Natural killer cell (primary cell): ENCODE measurements at regions of chr5 and their contacts with region 1.

Region 1: GRCh38 chr5:147822686-147823491 is 8.6 kb downstream of the SPINK1 start:
- DNase-seq: peak; percentile 26 to 79
- ATAC-seq: peak; percentile 94 to 99 (median 98)
- H3K4me3 ChIP-seq: no peak overlapping the region
- H3K4me3 Mint-ChIP-seq: no peak overlapping the region
- H3K27ac ChIP-seq: no peak overlapping the region
- H3K27ac Mint-ChIP-seq: no peak overlapping the region
- H3K4me1 ChIP-seq: no peaks in the 10 kb centered on the region
- H3K4me1 Mint-ChIP-seq: peaks cover 0 to 9% of the 10 kb centered on the region in 2 donors
- H3K27me3 ChIP-seq: no peaks in the 10 kb centered on the region
- H3K27me3 Mint-ChIP-seq: peaks cover 13 to 14% of the 10 kb centered on the region in 2 donors
- CTCF ChIP-seq: peak; percentile 99

Region 2: DNA sequence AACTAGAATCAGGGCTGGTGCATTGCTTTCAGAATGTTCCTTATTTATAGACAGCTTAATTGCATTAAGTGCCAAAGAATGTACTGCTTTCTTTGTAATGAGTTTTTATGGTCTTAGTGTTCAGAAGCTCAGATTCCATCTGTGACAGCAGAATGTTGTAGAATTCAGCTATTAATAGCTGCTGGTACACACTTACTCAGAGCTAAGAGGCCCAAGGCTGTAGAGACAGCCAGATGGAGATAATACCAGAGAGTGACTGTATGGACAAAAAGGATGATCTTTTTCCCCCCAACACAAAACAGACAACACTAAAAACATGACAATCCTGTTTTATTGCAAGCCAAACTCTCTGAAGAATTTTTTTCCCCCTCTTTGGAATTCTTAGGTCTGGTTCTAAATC is 994.5 kb before region 1 on chr5:
- intact Hi-C with region 1: no loop called
- DNase-seq: no peak
- ATAC-seq: no peak
- H3K4me3 ChIP-seq: no peak overlapping the region
- H3K4me3 Mint-ChIP-seq: no peak overlapping the region
- H3K27ac ChIP-seq: no peak overlapping the region
- H3K27ac Mint-ChIP-seq: no peak overlapping the region
- H3K4me1 ChIP-seq: no peaks in the 10 kb centered on the region
- H3K4me1 Mint-ChIP-seq: peaks cover 26 to 35% of the 10 kb centered on the region in 2 donors
- H3K27me3 ChIP-seq: no peaks in the 10 kb centered on the region
- H3K27me3 Mint-ChIP-seq: no peaks in the 10 kb centered on the region
- CTCF ChIP-seq: no peak

Region 3: GRCh38 chr5:147453875-147454814 is 368.7 kb before region 1 on chr5:
- intact Hi-C with region 1: loop called (anchors 1 kb)
- DNase-seq: peak; percentile 62 to 75
- ATAC-seq: peak; percentile 78 to 86 (median 83)
- H3K4me3 ChIP-seq: peak overlapping the region; percentile 19
- H3K4me3 Mint-ChIP-seq: peak overlapping the region; percentile 99
- H3K27ac ChIP-seq: no peak overlapping the region
- H3K27ac Mint-ChIP-seq: peak overlapping the region in 1 of 2 donors; percentile 52
- H3K4me1 ChIP-seq: peaks cover 16% of the 10 kb centered on the region
- H3K4me1 Mint-ChIP-seq: peaks cover 15 to 20% of the 10 kb centered on the region in 2 donors
- H3K27me3 ChIP-seq: peaks cover 25% of the 10 kb centered on the region
- H3K27me3 Mint-ChIP-seq: peaks cover 46 to 86% of the 10 kb centered on the region in 2 donors
- CTCF ChIP-seq: peak; percentile 78

Region 4: DNA sequence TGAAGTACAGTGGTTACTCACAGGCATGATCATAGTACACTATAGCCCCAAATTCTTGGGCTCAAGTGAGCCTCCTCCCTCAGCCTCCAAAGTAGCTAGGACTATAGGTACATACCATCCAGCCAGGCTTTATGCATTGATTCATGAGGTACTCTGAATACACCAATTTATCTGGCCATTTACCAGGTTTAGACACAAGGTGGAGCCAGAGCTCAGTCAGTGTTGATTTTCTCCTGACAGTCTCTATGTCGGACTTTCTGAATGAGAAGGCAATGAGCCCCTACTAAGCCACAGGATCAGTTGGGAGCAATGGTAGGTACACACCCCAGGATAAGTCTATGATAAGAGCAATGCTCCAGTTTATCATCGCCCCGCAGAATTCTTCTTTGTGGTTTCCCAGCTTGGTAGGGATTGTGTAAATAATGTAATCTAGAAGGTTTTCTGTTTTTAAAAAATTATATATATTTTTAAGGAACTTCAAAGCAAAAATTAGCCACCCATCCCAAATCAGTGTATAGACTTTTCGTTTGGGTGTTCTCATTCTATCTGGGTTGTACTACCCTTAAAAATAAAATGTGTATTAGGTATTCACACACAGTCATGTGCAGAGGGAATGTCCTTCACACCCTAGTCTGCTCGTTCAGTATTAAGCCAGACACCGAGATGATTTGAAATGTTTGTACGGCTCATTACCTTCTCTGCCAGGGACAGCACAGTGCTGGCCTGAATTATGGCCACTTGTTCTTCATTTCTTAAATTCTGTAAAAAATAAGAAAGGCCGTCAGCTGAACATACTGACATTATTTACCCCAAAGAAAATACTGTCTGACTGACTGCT is 194.6 kb before region 1 on chr5:
- intact Hi-C with region 1: loop called (anchors 1 kb)
- DNase-seq: peak; percentile 42 to 76
- ATAC-seq: peak; percentile 84 to 91 (median 90)
- H3K4me3 ChIP-seq: no peak overlapping the region
- H3K4me3 Mint-ChIP-seq: no peak overlapping the region
- H3K27ac ChIP-seq: no peak overlapping the region
- H3K27ac Mint-ChIP-seq: no peak overlapping the region
- H3K4me1 ChIP-seq: no peaks in the 10 kb centered on the region
- H3K4me1 Mint-ChIP-seq: peaks cover 0 to 4% of the 10 kb centered on the region in 2 donors
- H3K27me3 ChIP-seq: no peaks in the 10 kb centered on the region
- H3K27me3 Mint-ChIP-seq: no peaks in the 10 kb centered on the region
- CTCF ChIP-seq: peak; percentile 82

Region 5: GRCh38 chr5:147751156-147751825 is 71.6 kb before region 1 on chr5:
- intact Hi-C with region 1: no loop called
- DNase-seq: no peak
- ATAC-seq: no peak
- H3K4me3 ChIP-seq: no peak overlapping the region
- H3K4me3 Mint-ChIP-seq: no peak overlapping the region
- H3K27ac ChIP-seq: no peak overlapping the region
- H3K27ac Mint-ChIP-seq: no peak overlapping the region
- H3K4me1 ChIP-seq: no peaks in the 10 kb centered on the region
- H3K4me1 Mint-ChIP-seq: peaks cover 43 to 44% of the 10 kb centered on the region in 2 donors
- H3K27me3 ChIP-seq: no peaks in the 10 kb centered on the region
- H3K27me3 Mint-ChIP-seq: no peaks in the 10 kb centered on the region
- CTCF ChIP-seq: no peak

Region 6: DNA sequence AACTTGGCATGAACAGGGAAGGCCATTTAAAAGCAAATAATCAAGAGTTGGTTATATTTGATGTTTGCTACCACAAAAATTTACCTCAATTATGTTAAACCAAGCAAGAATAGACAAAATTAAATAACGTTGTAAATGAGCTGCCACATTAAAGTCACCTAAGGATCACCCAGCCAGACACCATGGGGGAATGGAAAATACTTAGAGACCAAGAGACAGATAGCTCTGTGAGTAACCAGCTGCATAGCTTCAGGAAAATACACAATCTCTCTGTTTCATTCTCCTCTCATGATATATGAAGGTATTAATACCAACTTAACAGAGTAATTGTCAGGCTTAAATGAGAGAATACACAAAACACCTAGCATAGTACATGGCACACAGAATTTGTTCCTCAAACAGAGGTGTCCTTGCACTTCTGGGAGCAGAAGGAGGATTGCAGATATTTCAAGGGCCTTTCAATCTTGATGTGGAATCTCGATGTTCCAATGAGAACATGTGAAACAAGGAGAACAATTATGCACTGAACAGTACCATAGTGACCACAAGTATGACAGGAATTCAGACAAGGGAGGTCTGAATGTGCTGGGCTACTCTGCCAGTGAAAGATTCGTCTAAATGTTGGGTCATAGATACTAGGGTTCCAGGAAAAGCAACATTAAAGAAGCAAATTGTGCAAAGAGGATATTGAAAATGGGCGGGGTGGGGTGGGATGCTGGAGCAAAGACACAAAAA is 58.9 kb before region 1 on chr5:
- intact Hi-C with region 1: no loop called
- DNase-seq: no peak
- ATAC-seq: no peak
- H3K4me3 ChIP-seq: no peak overlapping the region
- H3K4me3 Mint-ChIP-seq: no peak overlapping the region
- H3K27ac ChIP-seq: no peak overlapping the region
- H3K27ac Mint-ChIP-seq: no peak overlapping the region
- H3K4me1 ChIP-seq: no peaks in the 10 kb centered on the region
- H3K4me1 Mint-ChIP-seq: peaks cover 30 to 34% of the 10 kb centered on the region in 2 donors
- H3K27me3 ChIP-seq: no peaks in the 10 kb centered on the region
- H3K27me3 Mint-ChIP-seq: no peaks in the 10 kb centered on the region
- CTCF ChIP-seq: no peak

Region 7: DNA sequence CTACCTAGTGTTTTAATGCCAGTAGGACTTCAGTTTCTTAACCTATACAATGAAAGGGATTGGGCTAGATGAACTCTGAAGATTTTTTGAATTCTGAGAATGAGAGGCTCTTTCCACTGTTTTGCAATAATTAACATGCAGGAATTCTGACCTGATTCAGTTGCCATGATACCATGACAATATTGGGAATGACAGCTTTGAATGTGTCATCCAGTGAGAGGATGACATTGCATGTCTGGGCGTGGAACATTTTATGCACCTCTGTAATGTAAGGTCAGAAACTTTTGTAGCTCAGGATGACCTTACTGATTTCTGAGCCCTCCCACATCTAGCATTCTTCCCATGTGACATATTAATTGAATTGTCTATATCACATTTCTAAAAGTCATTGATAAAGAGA is 210.3 kb after region 1 on chr5:
- intact Hi-C with region 1: no loop called
- DNase-seq: no peak
- ATAC-seq: no peak
- H3K4me3 ChIP-seq: no peak overlapping the region
- H3K4me3 Mint-ChIP-seq: no peak overlapping the region
- H3K27ac ChIP-seq: no peak overlapping the region
- H3K27ac Mint-ChIP-seq: no peak overlapping the region
- H3K4me1 ChIP-seq: no peaks in the 10 kb centered on the region
- H3K4me1 Mint-ChIP-seq: no peaks in the 10 kb centered on the region
- H3K27me3 ChIP-seq: no peaks in the 10 kb centered on the region
- H3K27me3 Mint-ChIP-seq: no peaks in the 10 kb centered on the region
- CTCF ChIP-seq: no peak